ENCODE measurements at regions of chr4 and their contacts with region 1.

Region 1: DNA sequence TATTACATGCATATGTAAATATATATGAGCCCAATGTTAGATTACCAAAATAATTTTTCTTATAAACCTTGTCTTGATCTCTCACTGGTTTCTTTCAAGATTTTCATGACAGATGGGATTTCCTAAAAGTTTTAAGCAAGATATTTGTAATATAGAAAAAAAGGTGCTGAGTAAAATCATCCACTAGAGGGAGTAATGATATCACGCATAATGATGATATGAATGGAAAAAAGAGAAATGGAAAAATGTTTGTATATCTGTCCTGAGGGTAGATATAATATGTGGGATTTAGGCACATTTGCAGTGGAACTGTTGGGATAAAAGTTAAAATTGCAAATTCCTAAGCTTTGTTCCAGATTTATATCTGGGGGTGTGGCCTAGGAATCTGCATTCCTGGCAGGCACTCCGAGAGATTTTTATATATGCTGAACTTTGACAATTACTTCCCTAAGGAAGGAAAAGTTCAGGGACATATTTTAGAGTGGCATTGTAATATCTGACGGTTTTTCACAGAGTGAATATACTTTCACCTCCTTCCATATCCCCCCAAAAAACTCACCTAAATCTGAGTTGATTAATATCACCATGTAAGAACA is 60.5 kb downstream of the TMA16 start:
- DNase-seq: peak; percentile 60
- ATAC-seq: no peak
- H3K4me3 ChIP-seq: no peak overlapping the region
- H3K27ac ChIP-seq: no peak overlapping the region
- H3K4me1 ChIP-seq: peaks cover 7% of the 10 kb centered on the region
- H3K27me3 ChIP-seq: no peaks in the 10 kb centered on the region
- CTCF ChIP-seq: peak; percentile 79

Region 2: DNA sequence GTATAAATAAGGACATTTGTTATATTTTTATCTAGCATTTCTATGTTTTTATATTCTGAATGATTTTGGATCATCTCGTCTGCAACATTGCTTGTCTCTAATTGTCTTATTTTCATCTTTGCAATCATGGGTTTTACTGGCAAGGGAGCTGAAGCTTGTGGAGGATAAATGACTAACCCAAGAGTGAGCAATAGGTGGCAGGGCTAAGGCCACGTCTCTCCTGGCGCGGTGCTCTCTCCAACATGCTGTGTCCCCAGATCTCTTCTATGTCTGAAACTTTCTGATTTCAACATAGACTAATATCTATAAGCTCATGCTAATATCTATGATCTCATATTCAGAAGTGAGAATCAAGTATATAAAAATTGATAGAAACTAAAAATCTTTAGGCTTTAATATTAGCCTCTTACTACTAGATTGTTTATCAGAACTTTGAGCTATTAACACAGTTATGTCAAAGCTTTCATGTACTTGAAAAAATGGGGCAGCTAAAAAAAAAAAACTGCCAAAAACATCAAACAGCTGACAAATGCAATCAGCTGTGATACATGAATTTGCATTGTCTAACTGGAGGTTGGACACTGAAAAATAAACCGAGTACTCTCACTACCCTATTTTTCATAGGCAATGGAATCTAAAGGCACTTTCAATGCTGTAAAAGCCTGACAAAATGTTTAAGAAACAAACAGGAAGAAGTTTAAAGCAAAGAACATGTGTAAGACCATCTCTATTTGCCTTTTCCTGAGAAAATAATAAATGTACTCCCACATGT is 108.7 kb after region 1 on chr4:
- CTCF ChIA-PET with region 1: interaction called, 4 read pairs
- POLR2A ChIA-PET with region 1: no interaction called
- intact Hi-C with region 1: loop called (anchors 2 kb)
- DNase-seq: no peak
- ATAC-seq: no peak
- H3K4me3 ChIP-seq: no peak overlapping the region
- H3K27ac ChIP-seq: no peak overlapping the region
- H3K4me1 ChIP-seq: no peaks in the 10 kb centered on the region
- H3K27me3 ChIP-seq: no peaks in the 10 kb centered on the region
- CTCF ChIP-seq: no peak

Region 3: GRCh38 chr4:163755013-163755412 is 200.0 kb after region 1 on chr4:
- CTCF ChIA-PET with region 1: interaction called, 11 read pairs
- POLR2A ChIA-PET with region 1: no interaction called
- intact Hi-C with region 1: loop called (anchors 1 kb)
- DNase-seq: peak; percentile 51
- ATAC-seq: peak; percentile 55
- H3K4me3 ChIP-seq: no peak overlapping the region
- H3K27ac ChIP-seq: no peak overlapping the region
- H3K4me1 ChIP-seq: no peaks in the 10 kb centered on the region
- H3K27me3 ChIP-seq: no peaks in the 10 kb centered on the region
- CTCF ChIP-seq: peak; percentile 67

Region 4: GRCh38 chr4:163930086-163930485 is 375.1 kb after region 1 on chr4:
- CTCF ChIA-PET with region 1: no interaction called
- POLR2A ChIA-PET with region 1: no interaction called
- intact Hi-C with region 1: loop called (anchors 10 kb)
- DNase-seq: no peak
- ATAC-seq: no peak
- H3K4me3 ChIP-seq: no peak overlapping the region
- H3K27ac ChIP-seq: no peak overlapping the region
- H3K4me1 ChIP-seq: no peaks in the 10 kb centered on the region
- H3K27me3 ChIP-seq: no peaks in the 10 kb centered on the region
- CTCF ChIP-seq: 0 out of 2 replicates have a peak, but pooled peaks have one; percentile 14

Region 5: DNA sequence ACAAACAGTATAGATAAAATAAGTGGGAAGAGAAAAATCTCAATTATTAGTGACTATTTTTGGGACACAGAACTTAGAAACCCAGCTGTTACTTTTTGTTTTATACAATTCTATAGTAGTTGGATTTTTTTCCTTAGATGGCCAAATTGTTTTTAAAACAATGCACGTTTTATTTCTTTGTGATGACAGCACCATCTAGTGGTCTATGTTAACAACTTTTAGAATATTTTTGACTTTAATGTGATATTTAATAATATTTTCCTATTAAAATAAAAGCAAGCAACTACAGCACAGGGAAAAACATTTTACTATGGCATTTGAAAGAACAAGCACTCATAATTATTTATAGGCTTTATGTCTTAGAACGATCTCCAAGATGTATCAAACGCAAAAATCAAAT is 1193.4 kb after region 1 on chr4:
- CTCF ChIA-PET with region 1: no interaction called
- POLR2A ChIA-PET with region 1: no interaction called
- intact Hi-C with region 1: loop called (anchors 1 kb)
- DNase-seq: peak; percentile 52
- ATAC-seq: no peak
- H3K4me3 ChIP-seq: no peak overlapping the region
- H3K27ac ChIP-seq: no peak overlapping the region
- H3K4me1 ChIP-seq: peaks cover 4% of the 10 kb centered on the region; the same call in 1 of the 2 replicates
- H3K27me3 ChIP-seq: no peaks in the 10 kb centered on the region
- CTCF ChIP-seq: peak; percentile 54